ENCODE measurements at regions of chr22 and their contacts with region 1.

Region 1: DNA sequence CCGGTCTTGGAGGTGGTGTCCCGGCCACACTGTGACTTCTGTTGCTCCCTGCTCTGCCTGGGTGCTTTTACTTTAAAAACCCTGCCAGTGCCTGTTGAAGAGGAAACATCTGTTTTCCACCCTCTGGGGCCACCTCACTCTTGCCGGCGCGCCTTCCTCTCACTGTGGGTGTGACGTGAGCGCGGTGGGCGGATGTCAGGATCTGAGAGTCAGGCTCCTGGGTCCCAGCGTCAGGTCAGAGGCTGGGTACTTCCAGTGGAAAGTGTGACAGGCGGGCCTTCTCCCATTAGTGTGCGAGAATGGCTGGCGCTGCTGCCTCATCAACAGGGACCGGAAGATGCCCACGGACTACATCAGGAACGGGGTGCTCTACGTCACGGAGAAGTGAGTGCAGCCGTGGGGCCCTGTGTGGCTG is 54.2 kb downstream of the GRAMD4 start:
- DNase-seq: peak; percentile 64 to 95 (median 86)
- ATAC-seq: peak; percentile 88
- H3K4me3 ChIP-seq: peak overlapping the region; percentile 60
- H3K4me3 Mint-ChIP-seq: peak overlapping the region; percentile 86
- H3K27ac ChIP-seq: peak overlapping the region; percentile 34 to 57
- H3K27ac Mint-ChIP-seq: peak overlapping the region; percentile 98
- H3K4me1 ChIP-seq: peaks cover 54% of the 10 kb centered on the region
- H3K4me1 Mint-ChIP-seq: peaks cover 21% of the 10 kb centered on the region
- H3K27me3 ChIP-seq: no peaks in the 10 kb centered on the region
- H3K27me3 Mint-ChIP-seq: no peaks in the 10 kb centered on the region
- CTCF ChIP-seq: no peak

Region 2: GRCh38 chr22:46563381-46564083 is 110.8 kb before region 1 on chr22:
- CTCF ChIA-PET with region 1: interaction called, 6 read pairs
- POLR2A ChIA-PET with region 1: no interaction called
- intact Hi-C with region 1: loop called in 1 of 2 experiments (anchors 1 kb)
- DNase-seq: peak; percentile 66 to 88 (median 74)
- ATAC-seq: peak; percentile 96
- H3K4me3 ChIP-seq: peak overlapping the region; percentile 30
- H3K4me3 Mint-ChIP-seq: peak overlapping the region; percentile 38
- H3K27ac ChIP-seq: no peak overlapping the region
- H3K27ac Mint-ChIP-seq: no peak overlapping the region
- H3K4me1 ChIP-seq: peaks cover 13% of the 10 kb centered on the region
- H3K4me1 Mint-ChIP-seq: peaks cover 9% of the 10 kb centered on the region
- H3K27me3 ChIP-seq: no peaks in the 10 kb centered on the region
- H3K27me3 Mint-ChIP-seq: no peaks in the 10 kb centered on the region
- CTCF ChIP-seq: peak; percentile 76

Region 3: DNA sequence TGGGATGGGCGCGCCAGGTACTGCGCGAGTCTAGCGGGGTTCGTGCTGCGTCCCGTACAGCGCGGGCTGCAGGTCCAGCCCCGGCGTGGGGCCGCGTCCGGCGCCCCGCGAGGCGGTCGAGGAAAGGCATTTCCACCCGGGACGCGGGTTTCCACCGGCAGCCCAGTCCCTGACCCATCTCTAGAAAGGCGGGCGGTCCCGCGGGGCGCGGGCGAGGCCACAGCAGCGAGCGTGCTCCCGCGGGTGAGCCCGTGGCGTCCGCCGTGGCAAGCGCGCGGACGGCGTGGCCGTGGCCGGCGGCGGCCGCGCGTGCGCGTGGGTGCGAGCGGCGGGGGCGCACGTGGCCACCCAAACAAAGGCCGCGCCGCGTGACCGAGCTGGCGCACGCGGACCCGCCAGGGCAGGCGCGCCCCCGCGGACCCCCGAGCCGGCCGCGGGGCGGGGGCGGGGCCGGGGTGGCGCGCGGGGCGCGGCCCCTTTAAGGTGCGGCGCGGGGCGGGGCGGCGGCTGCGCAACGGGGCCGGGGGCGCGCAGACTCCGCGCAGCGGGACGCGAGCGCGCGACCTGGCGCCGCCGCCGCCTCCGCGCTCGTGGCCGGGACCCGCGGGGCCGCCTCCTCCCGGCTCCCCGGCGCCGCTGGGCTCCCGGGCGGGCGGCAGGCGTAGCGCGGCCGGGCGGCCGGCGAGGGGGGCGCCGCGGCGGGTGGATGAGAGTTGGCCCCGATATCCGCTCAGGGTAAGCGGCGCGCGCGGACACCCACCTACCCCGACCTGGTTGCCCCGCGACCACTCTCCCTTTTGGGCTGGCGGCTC is 97.6 kb before region 1 on chr22:
- CTCF ChIA-PET with region 1: no interaction called
- POLR2A ChIA-PET with region 1: no interaction called
- intact Hi-C with region 1: loop called in 1 of 2 experiments (anchors 5 kb)
- DNase-seq: peak; percentile 29 to 91 (median 56)
- ATAC-seq: peak; percentile 75
- H3K4me3 ChIP-seq: peak overlapping the region; percentile 65
- H3K4me3 Mint-ChIP-seq: peak overlapping the region; percentile 93
- H3K27ac ChIP-seq: no peak overlapping the region
- H3K27ac Mint-ChIP-seq: peak overlapping the region; percentile 85
- H3K4me1 ChIP-seq: peaks cover 43% of the 10 kb centered on the region
- H3K4me1 Mint-ChIP-seq: peaks cover 41% of the 10 kb centered on the region
- H3K27me3 ChIP-seq: no peaks in the 10 kb centered on the region
- H3K27me3 Mint-ChIP-seq: no peaks in the 10 kb centered on the region
- CTCF ChIP-seq: no peak

Region 4: DNA sequence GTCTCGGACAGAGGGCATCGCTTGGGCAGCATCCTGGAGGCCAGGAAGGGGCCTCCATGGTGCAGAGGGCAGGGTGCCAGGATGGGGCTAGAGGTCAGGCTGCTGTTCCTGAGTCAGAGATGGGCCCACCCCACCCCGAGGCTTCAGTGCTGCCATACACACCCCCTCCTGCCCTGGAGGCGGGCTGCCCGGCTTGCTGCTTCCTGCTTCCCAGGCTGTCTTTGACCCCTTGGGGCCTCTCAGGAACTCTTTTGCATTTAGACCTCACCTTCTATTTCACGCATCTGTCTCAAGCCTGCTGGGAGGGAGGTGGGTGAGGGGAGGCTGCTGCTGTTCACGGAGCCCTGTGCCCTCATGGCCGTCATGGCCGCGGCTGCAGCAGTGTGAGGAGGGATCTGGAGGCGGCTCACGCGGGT is 60.8 kb before region 1 on chr22:
- CTCF ChIA-PET with region 1: no interaction called
- POLR2A ChIA-PET with region 1: no interaction called
- intact Hi-C with region 1: loop called (anchors 1 to 5 kb)
- DNase-seq: peak in 4 of 14 experiments; percentile 7 to 30 (median 14)
- ATAC-seq: no peak
- H3K4me3 ChIP-seq: peak overlapping the region; percentile 62
- H3K4me3 Mint-ChIP-seq: peak overlapping the region; percentile 93
- H3K27ac ChIP-seq: peak overlapping the region in 1 of 2 donors; percentile 14
- H3K27ac Mint-ChIP-seq: peak overlapping the region; percentile 96
- H3K4me1 ChIP-seq: peaks cover 33% of the 10 kb centered on the region
- H3K4me1 Mint-ChIP-seq: peaks cover 28% of the 10 kb centered on the region
- H3K27me3 ChIP-seq: no peaks in the 10 kb centered on the region
- H3K27me3 Mint-ChIP-seq: no peaks in the 10 kb centered on the region
- CTCF ChIP-seq: no peak

Region 5: GRCh38 chr22:46660604-46661201 is 13.7 kb before region 1 on chr22:
- CTCF ChIA-PET with region 1: no interaction called
- POLR2A ChIA-PET with region 1: no interaction called
- intact Hi-C with region 1: loop called in 1 of 2 experiments (anchors 1 kb)
- DNase-seq: peak in 8 of 14 experiments; percentile 14 to 72 (median 35)
- ATAC-seq: peak; percentile 70
- H3K4me3 ChIP-seq: no peak overlapping the region
- H3K4me3 Mint-ChIP-seq: peak overlapping the region; percentile 4
- H3K27ac ChIP-seq: peak overlapping the region in 1 of 2 donors; percentile 12
- H3K27ac Mint-ChIP-seq: peak overlapping the region; percentile 87
- H3K4me1 ChIP-seq: peaks cover 29% of the 10 kb centered on the region
- H3K4me1 Mint-ChIP-seq: peaks cover 28% of the 10 kb centered on the region
- H3K27me3 ChIP-seq: no peaks in the 10 kb centered on the region
- H3K27me3 Mint-ChIP-seq: no peaks in the 10 kb centered on the region
- CTCF ChIP-seq: no peak

Region 6: DNA sequence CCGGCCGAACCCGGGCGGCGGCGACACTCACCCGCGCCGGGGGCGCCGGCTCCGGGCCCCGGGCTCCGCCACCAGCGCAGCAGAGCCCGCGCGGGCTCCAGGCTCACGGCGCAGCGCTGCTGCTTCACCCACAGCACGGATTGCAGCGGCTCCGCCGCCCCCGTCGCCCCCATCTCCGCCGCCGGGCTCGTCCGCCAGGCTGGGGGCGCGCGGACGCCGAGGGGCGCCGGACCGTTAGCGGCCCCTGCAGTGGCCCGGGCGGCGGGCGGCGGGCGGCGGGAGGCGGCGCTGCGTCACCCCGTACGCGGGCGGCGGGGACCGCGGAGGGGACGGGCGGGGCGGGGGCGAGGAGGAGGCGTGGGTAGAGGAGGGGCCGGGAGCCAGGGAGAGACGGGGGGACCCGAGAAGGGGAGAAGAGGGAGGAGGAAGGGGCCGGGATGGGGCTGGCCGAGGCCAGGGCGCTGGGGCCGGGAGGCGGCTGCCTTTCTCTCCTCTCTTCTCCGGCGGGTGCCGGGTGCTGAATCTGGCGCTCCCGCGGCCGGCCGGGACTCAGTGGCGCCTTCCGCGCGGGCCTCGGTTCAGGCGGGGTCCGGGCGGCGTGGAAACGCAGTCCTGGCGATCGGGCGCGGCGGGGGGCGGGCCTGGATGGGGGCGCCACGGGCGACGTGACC is 63.7 kb after region 1 on chr22 and contains the start of gene CERK:
- CTCF ChIA-PET with region 1: no interaction called
- POLR2A ChIA-PET with region 1: no interaction called
- intact Hi-C with region 1: loop called in 1 of 2 experiments (anchors 2 kb)
- DNase-seq: peak; percentile 55 to 87 (median 75)
- ATAC-seq: peak; percentile 50
- H3K4me3 ChIP-seq: peak within 1 kb of the TSS; percentile 83
- H3K4me3 Mint-ChIP-seq: peak within 1 kb of the TSS; percentile 100
- H3K27ac ChIP-seq: peak within 1 kb of the TSS; percentile 86 to 89
- H3K27ac Mint-ChIP-seq: peak within 1 kb of the TSS; percentile 99
- H3K4me1 ChIP-seq: peaks cover 56% of the 10 kb centered on the region
- H3K4me1 Mint-ChIP-seq: peaks cover 51% of the 10 kb centered on the region
- H3K27me3 ChIP-seq: no peaks in the 10 kb centered on the region
- H3K27me3 Mint-ChIP-seq: no peaks in the 10 kb centered on the region
- CTCF ChIP-seq: no peak
- total RNA-seq, gene CERK: 84.6 to 88.5 TPM

Region 7: DNA sequence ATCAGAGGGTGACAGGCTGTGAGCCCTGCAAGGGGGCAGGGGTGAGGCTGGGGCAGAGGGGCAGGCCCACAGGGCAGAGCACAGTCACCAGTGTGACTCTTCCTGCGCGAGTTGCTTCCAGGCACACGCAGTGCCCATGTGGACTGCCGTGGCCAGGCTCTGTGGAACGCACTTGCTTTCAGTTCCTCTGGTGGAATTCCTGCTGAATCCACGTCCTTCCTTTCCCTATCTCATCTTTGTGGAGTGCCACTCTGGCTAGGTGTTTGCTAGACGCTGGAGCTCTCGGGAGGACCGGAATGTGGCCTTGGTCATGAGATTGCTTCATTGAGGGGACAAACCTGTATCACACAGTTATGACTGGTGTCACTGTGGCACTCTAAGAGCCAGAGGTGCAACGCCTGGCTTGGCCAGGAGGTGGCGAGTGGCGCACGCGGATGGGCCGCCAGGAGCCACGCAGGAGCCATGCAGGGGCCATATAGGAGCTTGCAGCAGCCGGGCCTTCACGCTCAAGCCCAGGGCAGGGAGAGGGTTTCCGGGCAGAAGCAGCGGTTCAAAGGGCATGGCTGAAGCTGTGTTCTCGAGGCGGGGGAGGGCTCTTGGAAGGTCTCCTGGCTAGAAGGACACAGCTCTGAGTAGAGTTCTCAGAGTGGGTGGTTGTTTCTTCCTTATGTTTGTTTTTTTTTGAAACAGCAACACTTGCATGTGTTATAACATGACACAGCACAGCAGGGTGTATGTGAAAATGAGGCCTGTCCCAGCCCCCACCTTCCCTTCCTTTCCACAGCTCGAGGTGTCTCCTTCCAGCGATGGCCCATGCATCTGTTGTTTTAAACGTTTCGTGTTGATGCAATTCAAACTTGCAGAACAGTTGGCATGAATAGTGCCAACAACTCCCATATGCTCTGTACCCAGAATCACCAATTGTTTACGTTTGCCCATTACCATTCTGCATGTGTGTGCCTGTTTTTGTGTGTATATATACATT is 124.3 kb after region 1 on chr22:
- CTCF ChIA-PET with region 1: no interaction called
- POLR2A ChIA-PET with region 1: no interaction called
- intact Hi-C with region 1: loop called in 1 of 2 experiments (anchors 5 kb)
- DNase-seq: peak; percentile 54 to 85 (median 78)
- ATAC-seq: peak; percentile 85
- H3K4me3 ChIP-seq: no peak overlapping the region
- H3K4me3 Mint-ChIP-seq: peak overlapping the region; percentile 8
- H3K27ac ChIP-seq: no peak overlapping the region
- H3K27ac Mint-ChIP-seq: peak overlapping the region; percentile 84
- H3K4me1 ChIP-seq: peaks cover 14% of the 10 kb centered on the region
- H3K4me1 Mint-ChIP-seq: peaks cover 47% of the 10 kb centered on the region
- H3K27me3 ChIP-seq: no peaks in the 10 kb centered on the region
- H3K27me3 Mint-ChIP-seq: no peaks in the 10 kb centered on the region
- CTCF ChIP-seq: peak; percentile 79